ENCODE measurements at regions of chr5 and their contacts with region 1.

Region 1: DNA sequence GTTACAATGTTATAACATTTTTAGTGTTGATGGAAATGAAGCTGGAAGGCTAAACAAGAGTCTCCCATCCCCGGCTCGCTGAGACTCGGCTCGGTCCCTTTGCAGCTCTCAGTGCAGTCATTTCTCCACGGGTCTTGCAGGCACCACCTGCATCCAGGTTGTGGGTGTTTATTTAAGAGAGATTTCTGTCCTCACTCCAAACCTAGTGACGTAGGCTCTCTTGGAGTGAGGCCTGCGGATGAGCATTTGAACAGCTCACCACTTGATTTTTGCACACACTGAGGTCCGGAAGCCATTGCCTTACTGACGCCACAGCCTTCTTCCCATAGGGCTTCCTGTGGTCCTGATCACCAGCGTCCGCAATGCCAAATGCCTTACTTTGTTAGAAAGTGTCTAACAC is 197.7 kb upstream of the OTULINL start:
- DNase-seq: no peak
- ATAC-seq: no peak
- H3K4me3 ChIP-seq: no peak overlapping the region
- H3K4me3 Mint-ChIP-seq: no peak overlapping the region
- H3K27ac ChIP-seq: no peak overlapping the region
- H3K27ac Mint-ChIP-seq: no peak overlapping the region
- H3K4me1 ChIP-seq: no peaks in the 10 kb centered on the region
- H3K4me1 Mint-ChIP-seq: peaks cover 0 to 10% (median 0%) of the 10 kb centered on the region in 3 donors
- H3K27me3 ChIP-seq: peaks cover 0 to 8% of the 10 kb centered on the region in 2 experiments
- H3K27me3 Mint-ChIP-seq: peaks cover 0 to 15% of the 10 kb centered on the region in 2 donors

Region 2: DNA sequence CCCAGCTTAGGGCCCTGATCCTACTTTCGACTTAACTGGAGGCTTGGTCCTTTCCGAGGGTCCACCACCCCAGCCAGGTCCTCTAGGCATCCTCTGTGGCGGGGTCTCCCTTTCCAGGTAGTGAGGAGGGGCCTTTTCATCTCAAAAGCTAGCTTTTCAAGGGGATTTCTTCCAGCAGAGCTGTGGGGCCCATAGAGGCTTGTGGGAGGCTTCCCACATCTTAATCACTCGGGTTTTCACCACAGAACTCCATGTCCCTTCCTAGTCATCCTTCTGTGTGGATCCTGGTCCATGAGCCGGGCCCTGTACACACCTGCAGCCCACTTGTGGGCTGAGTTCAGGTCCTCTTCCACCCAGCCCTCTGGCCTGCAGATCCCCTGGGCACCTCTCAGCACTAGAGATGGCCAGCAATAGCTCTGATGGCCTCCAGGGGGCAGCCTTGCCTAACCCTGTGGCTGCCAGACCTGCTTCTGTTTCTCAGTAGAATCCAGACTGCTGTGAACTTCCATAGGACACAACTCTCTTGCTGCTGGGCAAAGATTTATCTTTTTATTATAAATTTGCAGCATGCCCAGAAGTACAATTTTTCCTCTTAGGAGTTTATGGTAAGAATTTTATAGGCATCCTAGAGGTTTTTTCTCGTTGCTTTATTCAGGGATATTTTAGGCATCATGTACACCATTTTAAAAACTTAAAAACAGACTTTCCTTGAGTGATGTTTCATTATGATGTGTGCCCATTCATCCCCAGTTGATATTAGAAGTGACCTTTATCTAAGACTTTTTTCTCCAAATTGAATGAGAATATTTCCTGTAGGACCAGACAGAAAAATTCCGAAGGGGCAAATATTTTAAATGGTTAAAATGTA is 31.8 kb before region 1 on chr5:
- CTCF ChIA-PET with region 1: interaction called in 1 of 2 experiments, 10 read pairs
- POLR2A ChIA-PET with region 1: interaction called in 1 of 2 experiments, 3 read pairs
- DNase-seq: peak; percentile 6 to 79 (median 46)
- ATAC-seq: peak; percentile 82 to 87 (median 84)
- H3K4me3 ChIP-seq: no peak overlapping the region
- H3K4me3 Mint-ChIP-seq: no peak overlapping the region
- H3K27ac ChIP-seq: no peak overlapping the region
- H3K27ac Mint-ChIP-seq: no peak overlapping the region
- H3K4me1 ChIP-seq: no peaks in the 10 kb centered on the region
- H3K4me1 Mint-ChIP-seq: no peaks in the 10 kb centered on the region
- H3K27me3 ChIP-seq: peaks cover 0 to 10% of the 10 kb centered on the region in 2 experiments
- H3K27me3 Mint-ChIP-seq: peaks cover 7 to 8% of the 10 kb centered on the region in 2 donors

Region 3: DNA sequence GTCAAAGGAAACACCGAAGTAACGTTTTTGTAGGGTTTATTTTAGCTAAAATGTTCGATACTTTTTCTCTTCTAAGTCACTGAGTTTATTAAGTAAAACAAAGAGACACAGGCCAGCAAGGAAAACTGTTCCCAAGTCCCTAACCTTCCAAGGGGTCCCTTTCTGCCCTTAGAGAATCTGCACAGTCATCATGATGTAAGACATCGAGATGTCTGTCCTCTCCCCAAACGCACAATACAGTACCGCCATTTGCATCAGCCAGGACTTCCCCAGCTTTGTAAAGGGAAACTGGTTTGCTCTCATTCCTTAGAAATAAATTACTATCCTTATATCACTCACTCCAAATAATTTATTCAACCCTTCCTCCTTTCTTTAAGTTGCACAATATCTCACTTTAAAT is 1706.3 kb after region 1 on chr5:
- CTCF ChIA-PET with region 1: no interaction called
- POLR2A ChIA-PET with region 1: no interaction called
- DNase-seq: no peak
- ATAC-seq: no peak
- H3K4me3 ChIP-seq: no peak overlapping the region
- H3K4me3 Mint-ChIP-seq: no peak overlapping the region
- H3K27ac ChIP-seq: no peak overlapping the region
- H3K27ac Mint-ChIP-seq: no peak overlapping the region
- H3K4me1 ChIP-seq: no peaks in the 10 kb centered on the region
- H3K4me1 Mint-ChIP-seq: no peaks in the 10 kb centered on the region
- H3K27me3 ChIP-seq: no peaks in the 10 kb centered on the region
- H3K27me3 Mint-ChIP-seq: peaks cover 0 to 4% of the 10 kb centered on the region in 2 donors